ENCODE measurements at regions of chrX and their contacts with region 1.

Region 1: GRCh38 chrX:40108959-40109287 is 11.2 kb upstream of the BCOR start:
- DNase-seq: peak; percentile 77 to 86 (median 85)
- H3K4me3 ChIP-seq: peak overlapping the region in 2 of 4 donors; percentile 36 to 68
- H3K27ac ChIP-seq: peak overlapping the region; percentile 69 to 97 (median 89)
- H3K4me1 ChIP-seq: peaks cover 30 to 51% of the 10 kb centered on the region in 2 donors
- H3K27me3 ChIP-seq: peaks cover 43% of the 10 kb centered on the region
- CTCF ChIP-seq: no peak
- POLR2A ChIP-seq: peak; percentile 43 to 77

Region 2: GRCh38 chrX:40153335-40154249 is 44.7 kb after region 1 on chrX:
- intact Hi-C with region 1: loop called in 1 of 2 experiments (anchors 5 kb)
- DNase-seq: peak in 6 of 7 donors; percentile 45 to 74 (median 62)
- H3K4me3 ChIP-seq: peak overlapping the region in 2 of 4 donors; percentile 4 to 56
- H3K27ac ChIP-seq: peak overlapping the region in 4 of 5 donors; percentile 72 to 92 (median 82)
- H3K4me1 ChIP-seq: peaks cover 11 to 21% of the 10 kb centered on the region in 2 donors
- H3K27me3 ChIP-seq: peaks cover 40% of the 10 kb centered on the region
- CTCF ChIP-seq: peak in 2 of 6 experiments; percentile 8 to 12
- POLR2A ChIP-seq: peak in 1 of 2 donors; percentile 16

Region 3: DNA sequence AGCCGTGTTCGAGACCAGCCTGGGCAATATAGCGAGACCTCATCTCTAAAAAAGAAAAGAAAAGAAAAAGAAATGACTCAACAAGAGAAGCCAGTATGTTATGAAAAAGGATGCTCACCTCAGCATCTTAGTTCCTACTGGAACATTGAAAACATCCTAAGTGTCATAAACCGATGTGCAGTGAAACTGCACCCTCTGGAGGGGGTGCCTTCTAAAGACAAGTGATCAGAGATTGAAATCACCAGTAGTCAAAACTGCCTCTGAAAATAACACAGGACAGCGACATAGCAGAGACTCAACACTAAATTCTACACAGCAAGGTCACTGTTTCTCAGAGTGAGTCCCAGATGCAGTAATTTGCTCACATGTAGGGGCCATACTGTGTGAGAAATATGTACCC is 443.8 kb after region 1 on chrX:
- intact Hi-C with region 1: no loop called
- DNase-seq: no peak
- H3K4me3 ChIP-seq: no peak overlapping the region
- H3K27ac ChIP-seq: no peak overlapping the region
- H3K4me1 ChIP-seq: no peaks in the 10 kb centered on the region
- H3K27me3 ChIP-seq: peaks cover 9% of the 10 kb centered on the region
- CTCF ChIP-seq: peak in 3 of 6 experiments; percentile 10 to 27 (median 10)
- POLR2A ChIP-seq: no peak